ENCODE measurements at regions of chr2 and their contacts with region 1.

Region 1: DNA sequence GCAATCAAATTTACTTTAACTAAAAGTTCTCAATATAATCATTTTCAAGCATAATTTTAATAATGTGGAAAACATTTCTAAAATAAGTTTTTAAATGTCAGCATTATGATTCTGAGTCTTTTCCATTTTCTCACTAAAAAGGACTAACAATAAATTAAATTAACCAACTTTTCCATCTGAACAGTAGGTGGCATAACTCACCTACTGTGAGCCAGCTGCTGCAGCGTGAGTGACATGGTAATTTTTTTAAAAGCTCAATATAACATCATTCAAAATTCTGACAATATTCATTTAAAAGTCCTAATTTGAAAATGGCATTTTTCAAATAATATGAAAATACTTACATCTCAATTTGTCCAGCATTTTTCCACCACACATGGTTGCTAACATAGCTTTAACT is 66.5 kb downstream of the DTNB start:
- DNase-seq: no peak
- H3K4me3 Mint-ChIP-seq: no peak overlapping the region
- H3K27ac Mint-ChIP-seq: no peak overlapping the region
- H3K4me1 Mint-ChIP-seq: peaks cover 7% of the 10 kb centered on the region
- H3K27me3 Mint-ChIP-seq: no peaks in the 10 kb centered on the region

Region 2: DNA sequence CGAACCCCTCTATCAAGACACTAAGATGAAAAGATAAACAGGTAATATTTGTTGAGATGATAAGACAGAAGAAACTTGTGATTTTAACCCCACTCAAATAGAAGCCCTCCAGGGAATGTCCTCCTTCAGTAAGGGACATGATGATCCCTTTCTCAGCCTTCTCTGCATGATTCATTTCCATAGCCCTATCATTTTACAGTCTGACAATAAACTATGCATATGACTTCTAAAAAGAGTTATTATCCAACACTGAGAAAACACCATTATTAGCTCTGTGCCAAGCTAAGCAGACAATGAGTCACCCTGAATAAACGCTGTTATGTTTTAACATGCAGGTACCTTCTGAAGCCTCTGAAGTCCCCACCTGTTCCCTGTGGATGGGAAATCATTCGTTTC is 11.7 kb after region 1 on chr2:
- CTCF ChIA-PET with region 1: interaction called, 25 read pairs
- DNase-seq: no peak
- H3K4me3 Mint-ChIP-seq: no peak overlapping the region
- H3K27ac Mint-ChIP-seq: no peak overlapping the region
- H3K4me1 Mint-ChIP-seq: no peaks in the 10 kb centered on the region
- H3K27me3 Mint-ChIP-seq: no peaks in the 10 kb centered on the region

Region 3: GRCh38 chr2:25664183-25664964 is 57.5 kb after region 1 on chr2:
- CTCF ChIA-PET with region 1: interaction called, 38 read pairs
- DNase-seq: peak; percentile 47
- H3K4me3 Mint-ChIP-seq: no peak overlapping the region
- H3K27ac Mint-ChIP-seq: no peak overlapping the region
- H3K4me1 Mint-ChIP-seq: peaks cover 4% of the 10 kb centered on the region
- H3K27me3 Mint-ChIP-seq: no peaks in the 10 kb centered on the region

Region 4: DNA sequence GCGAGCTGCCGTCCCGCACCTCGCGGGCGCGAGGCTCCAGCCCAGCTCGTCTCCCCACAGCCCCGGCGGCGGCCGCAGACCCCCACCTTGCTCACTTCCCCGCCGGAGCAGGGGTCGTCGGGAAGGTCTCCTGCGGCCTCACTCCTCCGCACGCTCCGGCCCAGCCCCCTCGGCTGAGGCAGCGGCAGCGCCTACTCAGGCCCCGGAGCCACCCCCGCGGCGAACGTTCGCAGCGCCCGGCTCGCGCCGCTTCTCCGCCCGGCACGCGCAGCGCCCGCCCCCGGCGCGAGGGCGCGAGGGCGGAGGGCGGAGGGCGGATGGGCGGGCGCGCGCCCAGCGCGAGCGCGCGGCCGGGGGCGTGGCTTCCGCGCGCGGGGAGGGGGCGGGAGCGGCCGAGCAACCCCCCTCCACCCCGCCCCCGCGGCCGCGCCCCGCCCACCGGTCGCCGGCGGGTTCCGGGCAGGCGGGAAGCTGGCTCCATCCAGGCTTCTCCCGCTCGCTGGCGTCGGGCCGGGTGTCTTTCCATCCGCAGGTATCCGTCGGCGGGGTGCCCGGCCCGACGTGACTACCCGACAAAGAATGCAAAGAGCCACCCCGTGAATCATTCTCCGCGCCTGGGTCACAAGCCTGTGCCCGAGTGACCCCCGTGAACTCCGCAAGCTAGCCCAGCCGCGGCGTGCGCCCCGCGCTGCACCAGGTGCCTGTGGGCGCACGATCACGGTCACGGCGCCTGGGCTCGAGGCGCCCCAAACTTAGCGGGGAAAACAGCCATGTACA is 66.6 kb after region 1 on chr2 and contains the start of gene DTNB:
- CTCF ChIA-PET with region 1: interaction called, 14 read pairs
- DNase-seq: peak; percentile 86
- H3K4me3 Mint-ChIP-seq: peak within 1 kb of the TSS; percentile 84
- H3K27ac Mint-ChIP-seq: peak within 1 kb of the TSS; percentile 87
- H3K4me1 Mint-ChIP-seq: peaks cover 31% of the 10 kb centered on the region
- H3K27me3 Mint-ChIP-seq: peaks cover 29% of the 10 kb centered on the region

Region 5: GRCh38 chr2:25926984-25927756 is 320.3 kb after region 1 on chr2:
- CTCF ChIA-PET with region 1: no interaction called
- DNase-seq: no peak
- H3K4me3 Mint-ChIP-seq: no peak overlapping the region
- H3K27ac Mint-ChIP-seq: no peak overlapping the region
- H3K4me1 Mint-ChIP-seq: no peaks in the 10 kb centered on the region
- H3K27me3 Mint-ChIP-seq: peaks cover 25% of the 10 kb centered on the region